ENCODE measurements at regions of chr2 and their contacts with region 1.

Region 1: DNA sequence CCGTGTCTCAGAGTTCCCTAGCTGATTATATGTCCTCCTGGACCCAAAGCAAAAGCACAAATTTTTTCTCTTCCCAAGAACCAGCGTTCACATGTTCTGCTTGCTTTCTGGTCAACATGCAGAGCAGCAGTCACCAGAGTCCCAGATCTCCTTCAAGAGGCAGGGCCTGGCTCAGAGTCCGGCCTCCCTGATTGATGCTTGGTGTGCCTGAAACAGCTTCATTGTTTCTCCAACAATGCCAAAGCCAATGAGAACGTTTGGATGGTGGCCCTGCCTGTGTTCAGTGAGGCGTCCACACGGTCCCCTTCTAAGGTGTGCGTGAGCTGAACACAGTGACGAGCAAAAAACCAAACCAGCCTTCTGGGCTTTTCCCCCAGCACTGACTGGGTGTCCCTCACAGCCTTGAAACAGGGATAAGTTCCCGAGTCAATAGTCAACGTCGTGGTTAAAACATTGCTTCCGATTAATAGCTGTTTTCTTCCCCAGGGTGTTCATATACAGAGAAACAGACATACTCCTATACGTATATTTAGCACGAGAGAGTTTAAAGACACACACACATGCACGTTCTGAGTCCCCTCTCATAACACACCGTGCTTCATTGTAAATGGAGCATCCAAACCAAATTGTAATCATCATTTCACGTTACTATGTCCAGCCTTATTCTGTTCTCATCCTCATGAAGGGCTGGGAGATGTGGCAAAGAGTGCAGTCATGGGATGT is 19.3 kb upstream of the POU3F3 start:
- DNase-seq: no peak
- H3K4me3 ChIP-seq: no peak overlapping the region
- H3K27ac ChIP-seq: no peak overlapping the region
- H3K4me1 ChIP-seq: no peaks in the 10 kb centered on the region
- H3K27me3 ChIP-seq: peaks cover 32% of the 10 kb centered on the region
- CTCF ChIP-seq: no peak
- EP300 ChIP-seq: no peak
- POLR2A ChIP-seq: no peak

Region 2: GRCh38 chr2:103119352-103119751 is 1715.2 kb before region 1 on chr2:
- in situ Hi-C with region 1: no loop called
- intact Hi-C with region 1: loop called (anchors 10 kb)
- DNase-seq: no peak
- H3K4me3 ChIP-seq: no peak overlapping the region
- H3K27ac ChIP-seq: no peak overlapping the region
- H3K4me1 ChIP-seq: no peaks in the 10 kb centered on the region
- H3K27me3 ChIP-seq: no peaks in the 10 kb centered on the region
- CTCF ChIP-seq: no peak
- EP300 ChIP-seq: no peak
- POLR2A ChIP-seq: no peak

Region 3: GRCh38 chr2:105888625-105889400 is 1054.2 kb after region 1 on chr2:
- in situ Hi-C with region 1: no loop called
- intact Hi-C with region 1: loop called (anchors 5 kb)
- DNase-seq: no peak
- H3K4me3 ChIP-seq: no peak overlapping the region
- H3K27ac ChIP-seq: no peak overlapping the region
- H3K4me1 ChIP-seq: peaks cover 10 to 31% (median 12%) of the 10 kb centered on the region in 4 donors
- H3K27me3 ChIP-seq: no peaks in the 10 kb centered on the region
- CTCF ChIP-seq: no peak
- EP300 ChIP-seq: no peak
- POLR2A ChIP-seq: no peak